Sciatic nerve (tissue), 2 donors: ENCODE measurements at regions of chr2 and their contacts with region 1.

Region 1: DNA sequence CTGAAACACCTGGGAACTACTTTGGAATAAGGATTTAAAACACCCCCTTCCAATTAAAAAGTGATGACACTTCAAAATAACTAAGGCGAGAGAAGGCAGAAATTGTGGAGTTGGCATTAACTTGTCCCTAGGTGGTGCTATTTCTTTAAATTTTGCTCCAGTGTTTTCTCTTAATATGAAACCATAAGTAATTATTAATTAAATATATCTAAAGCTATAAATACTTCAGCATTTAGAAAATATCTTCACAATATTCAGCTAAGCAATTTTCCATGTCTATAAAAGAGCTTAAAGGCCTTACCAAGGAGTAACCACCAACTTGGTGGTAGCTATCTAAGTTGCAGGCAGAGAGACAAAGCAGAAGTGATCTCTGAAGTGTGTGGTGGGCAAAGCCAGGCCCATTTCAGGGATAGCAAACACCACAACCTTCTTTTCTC is 186.8 kb upstream of the PGAP1 start:
- DNase-seq: no peak
- ATAC-seq: peak; percentile 32

Region 2: GRCh38 chr2:197378494-197379307 is 265.4 kb after region 1 on chr2:
- intact Hi-C with region 1: loop called (anchors 2 kb)
- DNase-seq: no peak
- ATAC-seq: peak; percentile 80